Heart left ventricle (tissue), 16 donors: ENCODE measurements at regions of chrX and their contacts with region 1.

Region 1: GRCh38 chrX:45794995-45795337 is 594.3 kb upstream of the DIPK2B start:
- DNase-seq: no peak
- ATAC-seq: no peak
- H3K4me3 ChIP-seq: no peak overlapping the region
- H3K27ac ChIP-seq: no peak overlapping the region
- H3K4me1 ChIP-seq: peaks cover 0 to 6% (median 0%) of the 10 kb centered on the region in 12 donors
- H3K27me3 ChIP-seq: peaks cover 0 to 12% (median 0%) of the 10 kb centered on the region in 9 donors
- CTCF ChIP-seq: no peak
- POLR2A ChIP-seq: no peak

Region 2: DNA sequence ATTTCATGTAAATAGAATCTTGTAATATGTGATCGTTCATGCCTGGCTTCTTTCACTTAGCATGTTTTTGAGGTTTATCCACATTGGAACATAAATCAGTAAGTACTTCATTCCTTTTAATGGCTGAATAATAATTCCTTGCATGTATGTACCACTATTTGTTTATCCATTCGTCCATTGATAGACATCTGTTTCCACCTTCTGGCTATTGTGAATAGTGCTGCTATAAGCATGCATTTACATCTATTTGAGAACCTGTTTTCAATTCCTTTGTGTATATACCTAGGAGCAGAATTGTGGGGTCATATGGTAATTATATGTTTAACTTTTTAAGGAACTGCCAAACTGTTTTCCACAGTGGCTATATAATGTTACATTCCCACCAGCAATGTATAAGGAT is 237.6 kb before region 1 on chrX:
- intact Hi-C with region 1: no loop called
- DNase-seq: no peak
- ATAC-seq: no peak
- H3K4me3 ChIP-seq: no peak overlapping the region
- H3K27ac ChIP-seq: no peak overlapping the region
- H3K4me1 ChIP-seq: no peaks in the 10 kb centered on the region
- H3K27me3 ChIP-seq: peaks cover 0 to 12% (median 0%) of the 10 kb centered on the region in 9 donors
- CTCF ChIP-seq: no peak
- POLR2A ChIP-seq: no peak

Region 3: DNA sequence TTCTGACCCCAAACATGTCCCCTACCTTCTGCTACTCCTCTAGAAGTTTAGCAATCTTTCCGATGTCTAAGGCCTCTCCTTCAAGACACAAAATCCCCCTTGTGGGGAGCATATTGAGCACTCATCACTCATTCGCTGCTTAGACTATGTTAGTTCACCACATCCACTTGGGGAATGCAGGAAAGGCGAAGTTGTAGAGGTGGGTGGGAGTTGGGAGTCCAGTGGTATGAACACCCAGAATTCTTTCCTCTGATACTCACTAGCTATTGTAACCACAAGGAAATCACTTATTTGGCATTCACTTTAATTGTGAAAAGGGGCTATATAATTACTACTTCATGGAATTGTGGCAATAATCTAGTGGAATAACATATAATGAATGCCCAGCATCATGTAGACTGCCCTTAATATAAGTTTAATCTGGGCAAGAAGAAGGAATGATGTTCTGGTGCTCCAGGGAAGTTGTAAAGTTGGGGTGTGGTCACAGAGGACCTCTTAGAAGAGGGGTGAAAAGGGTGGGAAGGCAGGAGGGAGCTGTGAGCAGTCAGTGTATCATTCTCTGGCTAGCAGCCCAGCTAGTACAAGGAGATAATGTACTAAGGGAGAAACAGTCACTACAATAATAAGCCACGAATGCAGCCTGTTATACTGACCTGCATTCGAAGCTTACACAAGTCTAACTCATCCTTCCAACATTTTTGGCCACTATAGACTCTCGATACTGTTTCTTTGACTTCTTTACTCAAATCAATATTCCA is 126.1 kb before region 1 on chrX:
- intact Hi-C with region 1: no loop called
- DNase-seq: no peak
- ATAC-seq: no peak
- H3K4me3 ChIP-seq: no peak overlapping the region
- H3K27ac ChIP-seq: no peak overlapping the region
- H3K4me1 ChIP-seq: no peaks in the 10 kb centered on the region
- H3K27me3 ChIP-seq: peaks cover 0 to 12% (median 0%) of the 10 kb centered on the region in 9 donors
- CTCF ChIP-seq: no peak
- POLR2A ChIP-seq: no peak

Region 4: DNA sequence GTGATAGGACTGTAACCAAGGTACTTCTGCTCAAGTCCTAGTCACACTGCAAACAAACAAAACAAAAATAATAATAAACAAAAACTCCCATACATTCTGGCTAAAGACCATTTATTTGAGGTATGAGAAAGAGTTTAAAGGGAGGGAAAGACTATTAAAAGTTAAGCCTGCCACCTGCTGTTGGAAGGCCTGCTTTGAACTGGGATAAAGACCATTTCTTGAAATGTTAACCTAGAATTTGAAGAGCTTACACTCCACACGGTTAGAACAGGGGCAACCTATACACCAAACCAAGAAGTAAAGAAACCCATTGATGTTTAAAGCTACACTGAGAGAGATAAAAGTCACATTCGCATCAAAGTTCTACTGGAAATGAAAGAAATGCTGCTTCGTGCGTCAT is 45.6 kb before region 1 on chrX:
- intact Hi-C with region 1: loop called in 1 of 10 experiments (anchors 5 kb)
- DNase-seq: no peak
- ATAC-seq: peak in 2 of 4 donors; percentile 39 to 55
- H3K4me3 ChIP-seq: peak overlapping the region in 8 of 12 donors; percentile 35 to 49 (median 41)
- H3K27ac ChIP-seq: peak overlapping the region in 11 of 12 donors; percentile 22 to 79 (median 67)
- H3K4me1 ChIP-seq: peaks cover 0 to 23% (median 3%) of the 10 kb centered on the region in 12 donors
- H3K27me3 ChIP-seq: peaks cover 0 to 23% (median 0%) of the 10 kb centered on the region in 9 donors
- CTCF ChIP-seq: peak in 10 of 12 donors; percentile 5 to 48 (median 29)
- POLR2A ChIP-seq: no peak